Sciatic nerve (tissue), 2 donors: ENCODE measurements at regions of chr18 and their contacts with region 1.

Region 1: GRCh38 chr18:43952398-43952797 is 675.1 kb upstream of the SYT4 start:
- DNase-seq: no peak
- ATAC-seq: peak; percentile 73

Region 2: GRCh38 chr18:44013871-44014270 is 61.5 kb after region 1 on chr18:
- intact Hi-C with region 1: no loop called
- DNase-seq: no peak
- ATAC-seq: no peak

Region 3: GRCh38 chr18:45589356-45590035 is 1637.1 kb after region 1 on chr18:
- intact Hi-C with region 1: loop called (anchors 10 kb)
- DNase-seq: no peak
- ATAC-seq: peak; percentile 80